ENCODE measurements at regions of chr2 and their contacts with region 1.

Region 1: DNA sequence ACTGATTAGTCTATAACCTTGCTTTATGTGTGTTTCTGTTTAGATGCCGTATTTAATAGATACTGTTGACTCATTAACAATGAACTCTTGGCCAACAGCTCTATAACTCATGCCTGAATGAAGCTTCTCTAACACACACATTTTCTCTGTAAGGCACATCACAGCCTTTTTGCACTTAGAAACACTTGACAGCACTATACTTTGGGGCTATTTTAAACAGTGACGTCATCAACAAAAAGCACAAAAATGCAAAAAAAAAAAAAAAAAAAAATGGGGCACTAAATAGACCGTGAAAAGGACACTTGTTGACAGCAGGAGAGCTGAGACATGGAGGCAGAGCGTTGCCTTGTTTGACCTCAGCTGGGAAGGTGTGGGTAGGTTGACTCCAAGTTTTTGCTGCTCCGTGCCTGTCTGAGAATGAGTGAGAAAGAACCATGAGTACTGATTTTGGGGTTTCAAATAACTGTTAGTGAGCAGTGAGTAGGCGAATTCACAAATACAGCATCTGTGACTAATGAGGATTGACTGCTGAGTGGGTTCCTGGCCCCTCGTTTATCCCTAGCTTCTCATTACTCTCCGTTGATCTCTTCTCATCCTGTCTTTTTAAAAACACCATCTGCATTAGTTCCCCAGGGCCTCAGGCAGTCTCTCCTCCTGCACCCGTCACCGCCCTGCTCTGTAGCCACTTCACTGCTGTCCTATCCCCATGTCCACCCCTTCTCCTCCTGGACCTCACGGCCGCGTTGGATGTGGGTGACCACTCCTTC is 24.4 kb downstream of the SPP2 start:
- DNase-seq: no peak
- H3K4me3 ChIP-seq: no peak overlapping the region
- H3K27ac ChIP-seq: no peak overlapping the region
- H3K4me1 ChIP-seq: no peaks in the 10 kb centered on the region
- H3K27me3 ChIP-seq: no peaks in the 10 kb centered on the region
- CTCF ChIP-seq: no peak

Region 2: GRCh38 chr2:233152541-233152940 is 922.4 kb before region 1 on chr2:
- CTCF ChIA-PET with region 1: no interaction called
- POLR2A ChIA-PET with region 1: interaction called, 17 read pairs
- intact Hi-C with region 1: no loop called
- DNase-seq: no peak
- H3K4me3 ChIP-seq: no peak overlapping the region
- H3K27ac ChIP-seq: no peak overlapping the region
- H3K4me1 ChIP-seq: no peaks in the 10 kb centered on the region
- H3K27me3 ChIP-seq: no peaks in the 10 kb centered on the region
- CTCF ChIP-seq: no peak

Region 3: GRCh38 chr2:234135720-234136221 is 60.8 kb after region 1 on chr2:
- CTCF ChIA-PET with region 1: no interaction called
- POLR2A ChIA-PET with region 1: no interaction called
- intact Hi-C with region 1: no loop called
- DNase-seq: peak; percentile 91 to 93
- H3K4me3 ChIP-seq: no peak overlapping the region
- H3K27ac ChIP-seq: peak overlapping the region; percentile 66
- H3K4me1 ChIP-seq: peaks cover 30% of the 10 kb centered on the region
- H3K27me3 ChIP-seq: no peaks in the 10 kb centered on the region
- CTCF ChIP-seq: peak; percentile 90

Measured in PC-9 (cell line).